ENCODE measurements at regions of chr6 and their contacts with region 1.

Region 1: DNA sequence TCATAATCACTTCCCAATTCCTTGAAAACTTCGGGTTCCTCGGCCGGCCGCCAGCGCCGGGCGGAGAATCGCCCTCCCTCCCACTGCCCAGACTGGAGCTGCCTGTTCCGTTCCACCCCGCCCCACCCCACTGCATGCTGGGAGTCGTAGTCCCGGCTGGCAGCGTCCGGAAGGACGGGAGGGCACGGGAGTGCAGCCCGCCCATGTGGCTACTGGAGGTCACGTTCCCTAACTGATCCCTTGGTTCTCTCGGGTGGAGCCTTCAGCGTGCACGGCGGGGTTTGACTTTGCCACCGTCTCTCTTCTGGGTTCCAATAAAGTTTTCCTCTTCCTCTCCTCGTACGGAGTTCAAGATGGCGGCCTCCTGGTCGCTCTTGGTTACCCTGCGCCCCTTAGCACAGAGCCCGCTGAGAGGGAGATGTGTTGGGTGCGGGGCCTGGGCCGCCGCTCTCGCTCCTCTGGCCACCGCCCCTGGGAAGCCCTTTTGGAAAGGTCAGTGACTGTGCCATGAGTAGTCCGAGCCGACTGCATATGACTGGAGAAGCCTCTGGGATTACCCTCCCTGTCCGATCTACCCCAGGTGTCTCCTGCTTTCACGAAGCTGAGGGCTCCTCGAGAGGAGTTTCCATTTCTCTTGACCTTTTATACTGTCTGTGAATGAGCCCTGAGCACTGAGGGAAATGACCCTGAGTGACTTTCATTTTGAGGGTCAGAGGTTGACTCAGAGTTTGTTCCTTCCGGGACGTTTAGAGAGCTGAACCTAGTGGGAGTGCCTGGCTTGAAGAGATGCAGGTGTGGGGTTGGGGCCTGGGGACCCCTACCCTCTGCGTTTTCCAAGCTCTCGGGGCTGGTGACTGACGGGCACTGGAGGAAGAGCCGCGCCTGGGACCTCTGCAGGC is at the start of gene AFG1L:
- DNase-seq: peak; percentile 90
- ATAC-seq: peak; percentile 96
- H3K4me3 Mint-ChIP-seq: peak within 1 kb of the TSS; percentile 95
- H3K27ac Mint-ChIP-seq: peak within 1 kb of the TSS; percentile 99
- H3K4me1 Mint-ChIP-seq: peaks cover 26% of the 10 kb centered on the region
- H3K27me3 Mint-ChIP-seq: no peaks in the 10 kb centered on the region
- total RNA-seq, gene AFG1L: 4.0 to 7.5 TPM

Region 2: DNA sequence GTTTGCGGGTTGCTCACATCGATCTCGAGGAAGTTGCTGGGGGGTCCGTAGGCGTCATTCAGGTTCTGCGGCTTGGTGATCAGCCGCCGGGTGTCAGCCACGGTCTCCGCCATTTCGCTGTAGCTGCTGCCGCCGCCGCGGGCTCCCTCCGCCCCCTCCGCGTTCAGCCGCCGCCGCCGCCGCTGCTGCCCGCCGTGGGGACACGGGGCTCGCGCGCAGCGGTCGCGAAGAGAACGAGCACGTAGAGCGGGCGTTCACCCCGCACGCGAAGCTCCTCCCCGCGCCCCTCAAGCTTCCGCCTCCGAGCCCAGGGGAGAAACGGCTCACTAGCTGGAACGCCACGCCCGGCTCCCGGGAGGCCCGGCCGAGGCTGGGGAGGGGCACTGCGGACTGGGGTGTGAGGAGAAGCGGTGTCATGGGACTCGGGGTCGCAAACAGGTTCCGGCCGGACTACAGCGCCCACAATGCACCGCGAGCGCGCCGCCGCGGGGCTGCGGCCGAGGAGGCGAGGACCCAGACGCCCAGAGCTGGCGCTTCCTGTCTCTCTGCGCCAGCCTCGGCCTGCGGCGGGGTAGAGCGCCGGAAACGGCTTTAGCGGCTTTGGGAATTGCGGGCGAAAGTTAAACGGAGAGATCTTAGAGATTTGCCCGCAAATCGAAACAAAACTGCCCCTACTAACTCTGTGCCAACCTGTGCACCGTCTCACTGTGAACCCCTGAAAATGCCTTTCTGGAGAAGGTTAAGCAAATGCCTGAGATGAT is 34.0 kb before region 1 on chr6 and contains the start of gene SNX3:
- CTCF ChIA-PET with region 1: interaction called, 4 read pairs
- POLR2A ChIA-PET with region 1: interaction called, 27 read pairs
- DNase-seq: peak; percentile 92
- ATAC-seq: peak; percentile 90
- H3K4me3 Mint-ChIP-seq: peak within 1 kb of the TSS; percentile 69
- H3K27ac Mint-ChIP-seq: peak within 1 kb of the TSS; percentile 80
- H3K4me1 Mint-ChIP-seq: peaks cover 20% of the 10 kb centered on the region
- H3K27me3 Mint-ChIP-seq: peaks cover 3% of the 10 kb centered on the region
- total RNA-seq, gene SNX3: 91.5 to 91.9 TPM

Region 3: DNA sequence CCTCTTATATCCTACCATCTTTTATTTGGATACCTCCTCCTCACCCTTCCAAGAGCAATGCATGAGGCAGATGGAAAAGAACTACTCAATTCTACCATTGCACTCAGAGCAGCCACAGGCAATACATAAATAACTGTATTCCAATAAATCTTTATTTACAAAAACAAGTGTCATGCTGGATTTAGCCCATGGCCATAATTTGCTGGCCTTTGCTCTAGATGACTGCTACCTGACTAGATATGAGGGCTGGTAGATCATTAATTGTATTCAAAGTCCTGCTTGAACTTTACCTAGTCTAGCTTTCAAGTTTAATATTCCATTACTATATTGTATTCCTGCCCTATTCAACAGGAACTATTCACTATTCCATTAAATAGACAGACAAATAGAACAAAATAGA is 37.0 kb after region 1 on chr6:
- CTCF ChIA-PET with region 1: no interaction called
- POLR2A ChIA-PET with region 1: no interaction called
- DNase-seq: no peak
- ATAC-seq: no peak
- H3K4me3 Mint-ChIP-seq: no peak overlapping the region
- H3K27ac Mint-ChIP-seq: no peak overlapping the region
- H3K4me1 Mint-ChIP-seq: no peaks in the 10 kb centered on the region
- H3K27me3 Mint-ChIP-seq: no peaks in the 10 kb centered on the region

Measured in activated CD8-positive, alpha-beta T cell treated with anti-CD3 and anti-CD28 coated beads, Interleukin-2, amount 10 ng/mL, durations not matched to agents 7 days and 5 days (primary cell).